ENCODE measurements at regions of chr12 and their contacts with region 1.

Region 1: GRCh38 chr12:98397316-98398105 is 117.9 kb upstream of the TMPO start:
- DNase-seq: peak; percentile 73
- H3K4me3 ChIP-seq: peak overlapping the region; percentile 26 to 45; a peak in 3 of 4 replicates
- H3K27ac ChIP-seq: no peak overlapping the region
- H3K4me1 ChIP-seq: peaks cover 7 to 8% of the 10 kb centered on the region in 2 experiments; a peak in 2 of 4 replicates
- H3K27me3 ChIP-seq: no peaks in the 10 kb centered on the region
- CTCF ChIP-seq: peak; percentile 93
- EP300 ChIP-seq: no peak
- RAD21 ChIP-seq: peak; percentile 90

Region 2: GRCh38 chr12:96985480-96986362 is 1411.8 kb before region 1 on chr12:
- CTCF ChIA-PET with region 1: interaction called, 10 read pairs
- POLR2A ChIA-PET with region 1: no interaction called
- DNase-seq: no peak
- H3K4me3 ChIP-seq: no peak overlapping the region; a peak in 1 of 4 replicates
- H3K27ac ChIP-seq: no peak overlapping the region
- H3K4me1 ChIP-seq: no peaks in the 10 kb centered on the region
- H3K27me3 ChIP-seq: no peaks in the 10 kb centered on the region
- CTCF ChIP-seq: no peak
- EP300 ChIP-seq: no peak
- RAD21 ChIP-seq: no peak

Region 3: GRCh38 chr12:98308141-98308540 is 89.4 kb before region 1 on chr12:
- CTCF ChIA-PET with region 1: no interaction called
- POLR2A ChIA-PET with region 1: no interaction called
- DNase-seq: no peak
- H3K4me3 ChIP-seq: no peak overlapping the region
- H3K27ac ChIP-seq: no peak overlapping the region
- H3K4me1 ChIP-seq: no peaks in the 10 kb centered on the region
- H3K27me3 ChIP-seq: no peaks in the 10 kb centered on the region
- CTCF ChIP-seq: no peak
- EP300 ChIP-seq: no peak
- RAD21 ChIP-seq: no peak

Region 4: GRCh38 chr12:98424726-98425401 is 27.4 kb after region 1 on chr12:
- CTCF ChIA-PET with region 1: interaction called, 10 read pairs
- POLR2A ChIA-PET with region 1: no interaction called
- DNase-seq: peak; percentile 70
- H3K4me3 ChIP-seq: no peak overlapping the region
- H3K27ac ChIP-seq: peak overlapping the region in 1 of 2 experiments; percentile 1; a peak in 1 of 4 replicates
- H3K4me1 ChIP-seq: peaks cover 0 to 19% of the 10 kb centered on the region in 2 experiments; a peak in 2 of 4 replicates
- H3K27me3 ChIP-seq: no peaks in the 10 kb centered on the region
- CTCF ChIP-seq: peak; percentile 80
- EP300 ChIP-seq: no peak
- RAD21 ChIP-seq: peak; percentile 63